Naive thymus-derived CD4-positive, alpha-beta T cell (primary cell): ENCODE measurements at regions of chr17 and their contacts with region 1.

Region 1: DNA sequence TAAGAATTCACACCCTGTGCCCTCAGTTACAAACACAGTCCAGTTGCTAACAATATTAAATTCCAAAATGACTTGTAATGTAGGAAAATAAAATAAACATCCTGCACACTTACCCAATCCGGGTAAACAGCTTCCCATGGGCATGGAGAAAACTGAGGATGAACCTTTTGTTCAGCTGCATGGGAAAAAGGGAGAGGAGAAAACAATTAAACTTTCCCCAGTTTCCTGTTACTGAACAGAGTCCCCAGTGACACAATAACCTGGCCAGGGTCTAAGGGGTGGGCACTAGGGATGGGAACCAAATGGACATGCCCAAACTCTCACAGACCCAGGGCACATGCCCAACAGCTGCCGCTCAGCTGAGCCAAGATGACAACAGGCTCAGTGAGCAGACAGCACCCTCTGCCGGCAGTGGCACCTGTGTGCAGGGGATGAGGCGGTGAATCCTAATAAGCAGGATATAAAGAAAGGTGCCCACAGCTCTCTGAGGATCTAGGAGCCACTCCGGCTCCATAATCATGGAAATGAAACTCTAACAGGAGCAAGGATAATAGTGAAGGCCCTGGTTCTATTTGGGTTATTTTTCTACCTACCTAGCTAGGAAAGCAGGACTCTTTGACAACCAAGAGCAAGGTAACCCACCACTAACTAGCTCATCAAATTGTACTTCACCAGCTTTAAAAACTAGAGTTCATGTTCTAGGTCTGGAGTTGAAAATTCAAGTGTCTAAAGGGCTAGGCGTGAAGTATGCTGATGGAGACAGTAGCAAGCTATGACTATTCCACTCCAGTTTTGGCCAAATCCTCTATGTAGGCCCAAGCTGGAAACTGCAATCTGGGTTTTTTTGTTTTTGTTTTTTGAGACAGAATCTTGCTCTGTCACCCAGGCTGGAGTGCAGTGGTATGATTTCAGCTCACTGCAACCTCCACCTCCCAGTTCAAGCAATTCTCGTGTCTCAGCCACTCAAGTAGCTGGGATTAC is 58.8 kb downstream of the SMG6 start:
- DNase-seq: peak; percentile 63 to 82 (median 74)
- ATAC-seq: peak; percentile 100
- H3K4me3 ChIP-seq: no peak overlapping the region
- H3K4me3 Mint-ChIP-seq: peak overlapping the region in 1 of 10 donors; percentile 52
- H3K27ac ChIP-seq: no peak overlapping the region
- H3K27ac Mint-ChIP-seq: peak overlapping the region in 7 of 9 donors; percentile 60 to 96 (median 87)
- H3K4me1 ChIP-seq: peaks cover 0 to 6% of the 10 kb centered on the region in 2 donors
- H3K4me1 Mint-ChIP-seq: peaks cover 9 to 82% (median 39%) of the 10 kb centered on the region in 7 donors
- H3K27me3 ChIP-seq: no peaks in the 10 kb centered on the region
- H3K27me3 Mint-ChIP-seq: no peaks in the 10 kb centered on the region

Region 2: GRCh38 chr17:1908699-1909309 is 336.0 kb before region 1 on chr17:
- CTCF ChIA-PET with region 1: interaction called, 4 read pairs
- POLR2A ChIA-PET with region 1: no interaction called
- intact Hi-C with region 1: loop called (anchors 1 to 5 kb)
- DNase-seq: peak in 7 of 9 donors; percentile 7 to 38 (median 25)
- ATAC-seq: peak; percentile 57
- H3K4me3 ChIP-seq: peak overlapping the region; percentile 36
- H3K4me3 Mint-ChIP-seq: peak overlapping the region; percentile 48 to 76 (median 61)
- H3K27ac ChIP-seq: no peak overlapping the region
- H3K27ac Mint-ChIP-seq: no peak overlapping the region
- H3K4me1 ChIP-seq: no peaks in the 10 kb centered on the region
- H3K4me1 Mint-ChIP-seq: peaks cover 2 to 16% (median 14%) of the 10 kb centered on the region in 7 donors
- H3K27me3 ChIP-seq: peaks cover 0 to 14% of the 10 kb centered on the region in 2 donors
- H3K27me3 Mint-ChIP-seq: peaks cover 44 to 76% (median 55%) of the 10 kb centered on the region in 5 donors

Region 3: DNA sequence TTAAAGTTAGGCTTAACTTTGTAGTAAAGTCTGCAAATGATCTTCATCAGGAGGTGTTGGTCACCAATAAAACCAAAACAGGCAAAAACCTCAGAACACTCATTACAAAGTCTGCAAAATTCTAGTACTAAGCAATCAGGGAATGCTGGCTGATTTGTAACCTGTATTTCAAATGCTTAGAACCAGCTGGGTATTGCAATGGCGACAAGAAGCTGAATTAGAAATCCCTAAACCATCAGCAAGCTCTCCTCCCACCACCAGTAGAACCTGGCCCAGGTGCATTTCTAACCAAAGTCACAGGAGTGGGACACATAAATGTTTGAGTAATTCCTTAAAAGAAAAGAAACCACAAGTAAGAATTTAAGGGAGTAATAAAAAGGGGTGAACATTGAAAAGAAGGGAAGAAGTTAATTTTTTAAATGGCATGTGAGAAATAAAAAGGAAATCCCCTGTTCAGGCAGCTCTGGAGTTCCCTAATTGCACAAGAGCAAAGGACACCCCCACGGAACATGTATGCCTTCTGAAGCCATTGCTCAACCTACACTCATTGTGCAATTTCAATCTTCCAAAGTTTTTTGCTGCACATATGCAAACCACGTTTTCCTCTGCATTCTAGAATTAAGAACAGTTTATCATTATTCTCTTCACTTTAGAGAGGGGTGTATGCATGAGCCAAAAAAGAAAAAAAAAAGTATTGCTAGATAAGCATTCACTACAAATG is 87.0 kb before region 1 on chr17:
- CTCF ChIA-PET with region 1: no interaction called
- POLR2A ChIA-PET with region 1: no interaction called
- intact Hi-C with region 1: loop called in 1 of 2 experiments (anchors 5 kb)
- DNase-seq: no peak
- ATAC-seq: no peak
- H3K4me3 ChIP-seq: no peak overlapping the region
- H3K4me3 Mint-ChIP-seq: no peak overlapping the region
- H3K27ac ChIP-seq: no peak overlapping the region
- H3K27ac Mint-ChIP-seq: peak overlapping the region in 3 of 9 donors; percentile 32 to 65 (median 36)
- H3K4me1 ChIP-seq: no peaks in the 10 kb centered on the region
- H3K4me1 Mint-ChIP-seq: peaks cover 0 to 34% (median 7%) of the 10 kb centered on the region in 7 donors
- H3K27me3 ChIP-seq: no peaks in the 10 kb centered on the region
- H3K27me3 Mint-ChIP-seq: no peaks in the 10 kb centered on the region

Region 4: GRCh38 chr17:2215616-2216364 is 29.0 kb before region 1 on chr17:
- CTCF ChIA-PET with region 1: interaction called, 13 read pairs
- POLR2A ChIA-PET with region 1: interaction called, 4 read pairs
- intact Hi-C with region 1: loop called (anchors 1 to 5 kb)
- DNase-seq: peak; percentile 43 to 81 (median 77)
- ATAC-seq: peak; percentile 98
- H3K4me3 ChIP-seq: peak overlapping the region; percentile 40
- H3K4me3 Mint-ChIP-seq: peak overlapping the region; percentile 74 to 89 (median 80)
- H3K27ac ChIP-seq: peak overlapping the region; percentile 89
- H3K27ac Mint-ChIP-seq: peak overlapping the region; percentile 94 to 98 (median 97)
- H3K4me1 ChIP-seq: peaks cover 34 to 53% of the 10 kb centered on the region in 2 donors
- H3K4me1 Mint-ChIP-seq: peaks cover 27 to 70% (median 64%) of the 10 kb centered on the region in 7 donors
- H3K27me3 ChIP-seq: no peaks in the 10 kb centered on the region
- H3K27me3 Mint-ChIP-seq: no peaks in the 10 kb centered on the region

Region 5: DNA sequence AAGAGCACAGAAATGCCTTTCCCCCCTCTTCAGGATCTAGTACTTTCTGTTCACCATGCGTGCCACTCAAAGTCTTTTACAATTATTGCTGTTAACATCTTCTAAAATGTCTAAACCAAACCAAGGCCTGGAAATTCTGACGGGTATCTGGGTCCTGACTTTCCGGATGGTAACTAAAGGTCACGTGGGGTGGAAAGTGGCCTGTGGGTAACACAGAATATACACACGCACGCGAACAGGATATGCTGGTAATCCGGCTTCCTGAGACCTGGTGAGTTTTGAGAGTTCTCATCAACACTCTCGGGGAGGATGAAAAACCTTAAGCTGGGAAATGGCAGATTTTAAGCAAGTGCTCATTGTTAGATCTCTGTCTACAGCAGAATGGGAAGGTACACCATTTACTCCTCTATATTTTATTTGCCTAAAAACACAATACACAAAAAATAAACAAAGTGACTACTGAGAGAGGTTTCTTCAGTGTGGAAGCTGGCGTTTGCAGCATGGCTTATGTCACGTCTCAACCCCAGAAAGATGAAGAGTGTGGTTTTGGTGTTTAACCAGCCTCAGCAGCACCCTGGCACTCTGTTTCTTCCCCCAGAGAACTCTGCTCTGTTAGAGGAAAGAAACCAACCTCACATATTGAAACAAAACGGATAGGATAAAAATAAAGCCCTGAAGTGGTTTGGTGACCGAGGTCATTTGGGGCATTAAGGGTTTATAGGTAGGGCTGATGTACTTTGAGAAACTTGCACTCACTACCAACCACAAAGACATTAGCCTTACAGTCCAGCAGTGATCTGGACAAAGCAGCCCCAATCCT is 21.4 kb after region 1 on chr17:
- CTCF ChIA-PET with region 1: interaction called, 53 read pairs
- POLR2A ChIA-PET with region 1: interaction called, 148 read pairs
- intact Hi-C with region 1: loop called (anchors 1 to 2 kb)
- DNase-seq: peak; percentile 20 to 96 (median 91)
- ATAC-seq: peak; percentile 92
- H3K4me3 ChIP-seq: peak overlapping the region; percentile 38
- H3K4me3 Mint-ChIP-seq: peak overlapping the region; percentile 69 to 94 (median 82)
- H3K27ac ChIP-seq: peak overlapping the region; percentile 80
- H3K27ac Mint-ChIP-seq: peak overlapping the region; percentile 96 to 100 (median 99)
- H3K4me1 ChIP-seq: peaks cover 65 to 90% of the 10 kb centered on the region in 2 donors
- H3K4me1 Mint-ChIP-seq: peaks cover 38 to 89% (median 83%) of the 10 kb centered on the region in 7 donors
- H3K27me3 ChIP-seq: no peaks in the 10 kb centered on the region
- H3K27me3 Mint-ChIP-seq: no peaks in the 10 kb centered on the region

Region 6: DNA sequence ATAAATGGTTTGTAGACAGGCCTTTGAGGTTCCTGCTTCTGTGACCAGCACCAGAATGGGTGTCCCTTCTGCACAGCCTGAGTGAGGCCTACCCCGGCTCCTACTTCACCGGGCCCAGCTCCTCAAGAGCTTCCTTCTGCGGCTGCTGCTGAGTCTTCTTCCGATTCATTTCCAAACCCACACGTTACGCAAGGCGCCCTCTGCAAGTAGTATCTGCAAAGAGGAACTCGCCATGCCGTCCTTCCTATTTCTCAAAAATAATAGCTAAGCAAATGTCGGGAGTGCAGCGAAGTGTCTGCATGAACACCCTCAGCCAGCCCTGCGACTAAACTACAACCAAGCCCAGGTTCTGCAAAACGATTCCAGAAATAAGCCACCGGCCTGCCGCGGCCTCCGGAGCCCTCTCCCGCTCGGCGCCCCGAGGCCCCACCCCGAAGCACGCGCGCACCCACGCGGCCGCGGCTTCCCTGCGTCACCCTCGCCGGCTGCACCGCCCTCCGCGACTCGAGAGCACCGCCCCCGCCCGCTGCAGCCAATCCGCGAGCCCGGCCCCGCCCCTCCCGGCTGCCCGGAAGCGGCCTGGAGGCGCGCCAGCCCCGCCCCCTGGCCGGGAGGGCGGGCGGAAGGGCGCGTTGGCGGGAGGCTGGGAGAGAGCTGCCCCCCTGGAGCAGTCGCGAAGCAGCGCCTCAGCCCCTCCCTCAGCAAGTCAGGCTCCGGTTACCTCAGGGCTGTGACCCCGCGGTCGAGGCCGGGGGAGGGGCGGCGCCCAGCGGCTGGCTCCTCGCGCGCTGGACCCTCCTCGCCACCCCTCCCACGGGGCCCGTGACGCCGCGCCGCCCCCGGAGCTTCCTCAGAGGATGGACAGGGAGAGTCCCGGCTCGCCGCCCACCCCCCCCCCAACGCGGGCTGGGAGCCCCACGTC is 147.7 kb after region 1 on chr17:
- CTCF ChIA-PET with region 1: no interaction called
- POLR2A ChIA-PET with region 1: no interaction called
- intact Hi-C with region 1: no loop called
- DNase-seq: peak; percentile 94 to 100 (median 98)
- ATAC-seq: peak; percentile 78
- H3K4me3 ChIP-seq: peak overlapping the region; percentile 89
- H3K4me3 Mint-ChIP-seq: peak overlapping the region; percentile 88 to 97 (median 94)
- H3K27ac ChIP-seq: peak overlapping the region; percentile 100
- H3K27ac Mint-ChIP-seq: peak overlapping the region; percentile 90 to 98 (median 96)
- H3K4me1 ChIP-seq: peaks cover 15 to 52% of the 10 kb centered on the region in 2 donors
- H3K4me1 Mint-ChIP-seq: peaks cover 38 to 70% (median 56%) of the 10 kb centered on the region in 7 donors
- H3K27me3 ChIP-seq: no peaks in the 10 kb centered on the region
- H3K27me3 Mint-ChIP-seq: no peaks in the 10 kb centered on the region

Region 7: GRCh38 chr17:3502466-3502865 is 1257.6 kb after region 1 on chr17:
- CTCF ChIA-PET with region 1: no interaction called
- POLR2A ChIA-PET with region 1: no interaction called
- intact Hi-C with region 1: no loop called
- DNase-seq: no peak
- ATAC-seq: no peak
- H3K4me3 ChIP-seq: no peak overlapping the region
- H3K4me3 Mint-ChIP-seq: no peak overlapping the region
- H3K27ac ChIP-seq: no peak overlapping the region
- H3K27ac Mint-ChIP-seq: no peak overlapping the region
- H3K4me1 ChIP-seq: no peaks in the 10 kb centered on the region
- H3K4me1 Mint-ChIP-seq: no peaks in the 10 kb centered on the region
- H3K27me3 ChIP-seq: no peaks in the 10 kb centered on the region
- H3K27me3 Mint-ChIP-seq: peaks cover 0 to 13% (median 3%) of the 10 kb centered on the region in 5 donors